Activated naive CD4-positive, alpha-beta T cell treated with anti-CD3 and anti-CD28 coated beads for 36 hours (primary cell): ENCODE measurements at regions of chr1 and their contacts with region 1.

Region 1: GRCh38 chr1:161071886-161072371 is 2.2 kb upstream of the ARHGAP30 start:
- DNase-seq: peak; percentile 72
- H3K4me3 Mint-ChIP-seq: no peak overlapping the region
- H3K27ac Mint-ChIP-seq: no peak overlapping the region
- H3K4me1 Mint-ChIP-seq: peaks cover 29% of the 10 kb centered on the region
- H3K27me3 Mint-ChIP-seq: no peaks in the 10 kb centered on the region

Region 2: DNA sequence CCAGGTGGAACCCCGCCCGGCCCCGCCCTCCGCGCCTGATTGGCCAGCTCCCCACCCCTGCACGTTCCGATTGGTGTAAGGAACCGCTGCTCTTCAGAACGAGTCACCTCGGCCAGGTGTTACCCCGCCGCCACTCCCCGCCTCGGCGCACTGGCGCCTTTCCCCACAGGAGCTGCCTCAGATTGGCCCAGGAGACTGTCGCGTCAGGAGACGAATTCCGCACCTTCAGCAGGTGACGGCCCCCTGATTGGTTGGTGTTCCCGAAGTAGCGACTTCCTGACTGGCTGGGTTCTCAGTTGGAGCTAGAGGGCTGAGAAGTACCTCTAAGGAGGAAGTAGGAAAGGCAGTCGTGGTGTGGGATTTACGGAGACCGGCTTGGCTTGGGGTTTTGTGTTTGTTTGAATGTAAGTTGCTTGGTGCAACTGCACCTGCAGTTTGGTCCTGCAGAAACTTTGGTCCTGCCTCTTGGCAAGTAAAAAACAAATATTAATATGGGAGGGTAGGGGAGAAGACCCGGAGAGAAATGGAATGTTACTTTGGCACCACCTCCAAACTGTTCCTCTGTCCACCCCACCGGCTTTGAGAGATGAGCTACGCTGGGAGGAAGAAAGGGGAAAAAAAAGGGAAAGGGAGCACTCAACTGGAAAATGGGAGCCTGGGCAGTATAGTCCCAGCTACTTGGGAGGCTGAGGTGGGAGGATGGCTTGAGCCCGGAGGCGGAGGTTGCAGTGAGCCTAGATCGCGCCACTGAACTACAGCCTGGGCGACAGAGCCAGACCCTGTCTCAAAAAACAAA is 50.6 kb before region 1 on chr1:
- CTCF ChIA-PET with region 1: no interaction called
- intact Hi-C with region 1: loop called (anchors 1 kb)
- DNase-seq: peak; percentile 94
- H3K4me3 Mint-ChIP-seq: peak overlapping the region; percentile 92
- H3K27ac Mint-ChIP-seq: peak overlapping the region; percentile 76
- H3K4me1 Mint-ChIP-seq: peaks cover 35% of the 10 kb centered on the region
- H3K27me3 Mint-ChIP-seq: no peaks in the 10 kb centered on the region

Region 3: GRCh38 chr1:161059293-161059692 is 12.6 kb before region 1 on chr1:
- CTCF ChIA-PET with region 1: interaction called, 10 read pairs
- intact Hi-C with region 1: no loop called
- DNase-seq: no peak
- H3K4me3 Mint-ChIP-seq: no peak overlapping the region
- H3K27ac Mint-ChIP-seq: peak overlapping the region; percentile 87
- H3K4me1 Mint-ChIP-seq: peaks cover 53% of the 10 kb centered on the region
- H3K27me3 Mint-ChIP-seq: no peaks in the 10 kb centered on the region

Region 4: DNA sequence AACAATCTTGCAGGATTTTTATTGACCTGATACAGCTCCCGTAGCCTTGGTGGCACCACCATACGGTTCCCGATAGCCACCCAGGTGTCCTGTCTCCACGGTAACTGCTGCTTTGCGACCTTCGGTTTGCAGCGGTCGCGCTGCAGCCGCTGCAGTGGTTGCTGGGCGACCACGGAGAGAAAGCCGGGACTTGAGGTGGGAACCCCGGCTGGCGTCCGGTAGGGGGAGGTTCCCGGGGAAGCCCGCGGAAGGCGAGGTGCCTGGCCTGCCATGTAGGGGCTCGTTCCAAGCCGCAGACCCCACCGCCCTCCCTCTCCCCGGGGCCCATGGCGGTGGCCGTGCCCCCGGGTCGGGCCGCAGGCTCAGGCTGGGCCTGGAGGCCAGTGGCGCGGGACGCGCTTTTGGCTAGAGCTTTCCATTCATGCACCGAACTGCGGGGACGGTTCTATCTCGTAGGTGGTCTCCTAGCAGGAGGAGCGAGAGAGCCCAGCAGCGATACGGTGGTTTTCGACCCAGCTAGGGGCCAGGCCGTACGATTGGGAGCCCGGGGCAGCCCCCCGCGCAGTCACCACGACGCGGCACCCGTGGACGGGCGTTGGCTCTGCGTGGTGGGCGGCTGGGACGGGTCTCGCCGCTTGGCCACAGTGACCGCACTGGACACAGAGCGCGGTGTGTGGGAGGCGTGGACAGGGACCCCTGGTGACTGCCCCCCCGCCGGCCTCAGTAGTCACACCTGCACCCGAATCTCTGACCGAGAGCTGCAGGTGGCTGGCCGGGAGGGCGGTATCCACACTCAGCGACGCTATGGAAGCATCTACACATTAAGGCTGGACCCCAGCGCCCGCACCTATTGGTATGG is 26.5 kb after region 1 on chr1 and contains the start of gene KLHDC9:
- CTCF ChIA-PET with region 1: interaction called, 221 read pairs
- intact Hi-C with region 1: loop called (anchors 1 kb)
- DNase-seq: peak; percentile 78
- H3K4me3 Mint-ChIP-seq: peak within 1 kb of the TSS; percentile 70
- H3K27ac Mint-ChIP-seq: peak within 1 kb of the TSS; percentile 54
- H3K4me1 Mint-ChIP-seq: peaks cover 39% of the 10 kb centered on the region
- H3K27me3 Mint-ChIP-seq: no peaks in the 10 kb centered on the region
- total RNA-seq, gene KLHDC9: 0.33 to 0.57 TPM

Region 5: GRCh38 chr1:161139765-161140164 is 67.8 kb after region 1 on chr1:
- CTCF ChIA-PET with region 1: interaction called, 16 read pairs
- intact Hi-C with region 1: no loop called
- DNase-seq: peak; percentile 71
- H3K4me3 Mint-ChIP-seq: no peak overlapping the region
- H3K27ac Mint-ChIP-seq: no peak overlapping the region
- H3K4me1 Mint-ChIP-seq: peaks cover 4% of the 10 kb centered on the region
- H3K27me3 Mint-ChIP-seq: no peaks in the 10 kb centered on the region

Region 6: GRCh38 chr1:161389691-161390558 is 318.0 kb after region 1 on chr1:
- CTCF ChIA-PET with region 1: no interaction called
- intact Hi-C with region 1: loop called (anchors 5 kb)
- DNase-seq: peak; percentile 97
- H3K4me3 Mint-ChIP-seq: peak overlapping the region; percentile 96
- H3K27ac Mint-ChIP-seq: peak overlapping the region; percentile 95
- H3K4me1 Mint-ChIP-seq: peaks cover 50% of the 10 kb centered on the region
- H3K27me3 Mint-ChIP-seq: no peaks in the 10 kb centered on the region